Activated T-helper 1 cell treated with anti-CD3 and anti-CD28 coated beads, Interleukin-12 subunit alpha, Interleukin-12 subunit beta, Interleukin-2, Interleukin-4 antibody, amounts not matched to agents 30 ng/mL and 10 ng/mL and 1 ng/mL, durations not matched to agents 14 hours and 24 hours and 36 hours (primary cell): ENCODE measurements at regions of chr16 and their contacts with region 1.

Region 1: GRCh38 chr16:23803591-23804123 is 32.1 kb upstream of the PRKCB start:
- DNase-seq: peak; percentile 62
- H3K4me3 Mint-ChIP-seq: no peak overlapping the region
- H3K27ac Mint-ChIP-seq: peak overlapping the region; percentile 27
- H3K4me1 Mint-ChIP-seq: peaks cover 19% of the 10 kb centered on the region
- H3K27me3 Mint-ChIP-seq: peaks cover 8% of the 10 kb centered on the region

Region 2: GRCh38 chr16:23826528-23827045 is 22.9 kb after region 1 on chr16:
- intact Hi-C with region 1: loop called (anchors 1 kb)
- DNase-seq: no peak
- H3K4me3 Mint-ChIP-seq: peak overlapping the region; percentile 15
- H3K27ac Mint-ChIP-seq: peak overlapping the region; percentile 52
- H3K4me1 Mint-ChIP-seq: peaks cover 34% of the 10 kb centered on the region
- H3K27me3 Mint-ChIP-seq: peaks cover 2% of the 10 kb centered on the region

Region 3: GRCh38 chr16:23863511-23864422 is 60.1 kb after region 1 on chr16:
- intact Hi-C with region 1: loop called (anchors 1 kb)
- DNase-seq: peak; percentile 30
- H3K4me3 Mint-ChIP-seq: peak overlapping the region; percentile 84
- H3K27ac Mint-ChIP-seq: peak overlapping the region; percentile 91
- H3K4me1 Mint-ChIP-seq: peaks cover 82% of the 10 kb centered on the region
- H3K27me3 Mint-ChIP-seq: no peaks in the 10 kb centered on the region

Region 4: GRCh38 chr16:23949630-23950290 is 146.1 kb after region 1 on chr16:
- intact Hi-C with region 1: loop called (anchors 2 kb)
- DNase-seq: peak; percentile 60
- H3K4me3 Mint-ChIP-seq: peak overlapping the region; percentile 41
- H3K27ac Mint-ChIP-seq: peak overlapping the region; percentile 92
- H3K4me1 Mint-ChIP-seq: peaks cover 74% of the 10 kb centered on the region
- H3K27me3 Mint-ChIP-seq: no peaks in the 10 kb centered on the region

Region 5: GRCh38 chr16:24036614-24037013 is 233.0 kb after region 1 on chr16:
- intact Hi-C with region 1: loop called (anchors 1 kb)
- DNase-seq: peak; percentile 16
- H3K4me3 Mint-ChIP-seq: no peak overlapping the region
- H3K27ac Mint-ChIP-seq: no peak overlapping the region
- H3K4me1 Mint-ChIP-seq: peaks cover 48% of the 10 kb centered on the region
- H3K27me3 Mint-ChIP-seq: no peaks in the 10 kb centered on the region

Region 6: DNA sequence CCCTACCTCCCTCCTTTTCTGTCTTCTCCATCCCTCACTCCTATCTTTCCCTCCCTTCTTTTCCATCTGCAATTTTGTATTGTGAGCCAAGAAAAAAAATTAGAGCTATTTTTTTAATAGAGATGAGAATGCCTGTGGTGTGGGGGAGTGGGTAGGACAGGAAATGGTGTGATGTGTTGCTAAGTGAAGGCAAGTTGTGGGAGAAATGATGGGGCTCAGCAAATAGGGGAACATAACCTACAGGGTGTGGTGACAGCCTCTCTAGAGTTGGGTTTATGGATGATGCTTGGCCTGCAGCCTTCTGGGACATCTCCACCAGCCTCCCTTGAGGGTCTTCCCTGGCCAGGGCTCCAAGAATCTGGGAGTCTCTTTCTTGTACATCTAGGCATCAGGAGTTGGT is 289.4 kb after region 1 on chr16:
- intact Hi-C with region 1: no loop called
- DNase-seq: no peak
- H3K4me3 Mint-ChIP-seq: no peak overlapping the region
- H3K27ac Mint-ChIP-seq: peak overlapping the region; percentile 38
- H3K4me1 Mint-ChIP-seq: peaks cover 23% of the 10 kb centered on the region
- H3K27me3 Mint-ChIP-seq: no peaks in the 10 kb centered on the region

Region 7: GRCh38 chr16:24504472-24505345 is 701.1 kb after region 1 on chr16:
- intact Hi-C with region 1: loop called (anchors 2 kb)
- DNase-seq: peak; percentile 50
- H3K4me3 Mint-ChIP-seq: no peak overlapping the region
- H3K27ac Mint-ChIP-seq: no peak overlapping the region
- H3K4me1 Mint-ChIP-seq: peaks cover 8% of the 10 kb centered on the region
- H3K27me3 Mint-ChIP-seq: peaks cover 8% of the 10 kb centered on the region